ENCODE measurements at regions of chr12 and their contacts with region 1.

Region 1: GRCh38 chr12:13255792-13256691 is 59.5 kb downstream of the EMP1 start:
- DNase-seq: peak; percentile 96
- H3K4me3 ChIP-seq: peak overlapping the region in 2 of 3 experiments; percentile 27 to 34
- H3K27ac ChIP-seq: peak overlapping the region; percentile 2
- H3K4me1 ChIP-seq: peaks cover 17% of the 10 kb centered on the region
- H3K27me3 ChIP-seq: no peaks in the 10 kb centered on the region
- CTCF ChIP-seq: peak; percentile 98 to 100
- POLR2A ChIP-seq: no peak

Region 2: GRCh38 chr12:13154027-13154538 is 102.0 kb before region 1 on chr12:
- CTCF ChIA-PET with region 1: no interaction called
- POLR2A ChIA-PET with region 1: no interaction called
- dilution Hi-C with region 1: no loop called
- intact Hi-C with region 1: no loop called
- DNase-seq: no peak
- H3K4me3 ChIP-seq: no peak overlapping the region
- H3K27ac ChIP-seq: no peak overlapping the region
- H3K4me1 ChIP-seq: no peaks in the 10 kb centered on the region
- H3K27me3 ChIP-seq: no peaks in the 10 kb centered on the region
- CTCF ChIP-seq: no peak
- POLR2A ChIP-seq: no peak

Region 3: GRCh38 chr12:13270817-13271216 is 14.8 kb after region 1 on chr12:
- CTCF ChIA-PET with region 1: interaction called, 29 read pairs
- POLR2A ChIA-PET with region 1: no interaction called
- dilution Hi-C with region 1: no loop called
- intact Hi-C with region 1: no loop called
- DNase-seq: no peak
- H3K4me3 ChIP-seq: no peak overlapping the region
- H3K27ac ChIP-seq: no peak overlapping the region
- H3K4me1 ChIP-seq: no peaks in the 10 kb centered on the region
- H3K27me3 ChIP-seq: peaks cover 8 to 22% of the 10 kb centered on the region in 2 experiments
- CTCF ChIP-seq: no peak
- POLR2A ChIP-seq: no peak

Region 4: GRCh38 chr12:13278249-13278787 is 22.3 kb after region 1 on chr12:
- CTCF ChIA-PET with region 1: interaction called, 57 read pairs
- POLR2A ChIA-PET with region 1: no interaction called
- dilution Hi-C with region 1: no loop called
- intact Hi-C with region 1: loop called (anchors 1 kb)
- DNase-seq: peak; percentile 72
- H3K4me3 ChIP-seq: no peak overlapping the region
- H3K27ac ChIP-seq: no peak overlapping the region
- H3K4me1 ChIP-seq: no peaks in the 10 kb centered on the region
- H3K27me3 ChIP-seq: peaks cover 35 to 48% of the 10 kb centered on the region in 2 experiments
- CTCF ChIP-seq: peak; percentile 99
- POLR2A ChIP-seq: no peak

Region 5: DNA sequence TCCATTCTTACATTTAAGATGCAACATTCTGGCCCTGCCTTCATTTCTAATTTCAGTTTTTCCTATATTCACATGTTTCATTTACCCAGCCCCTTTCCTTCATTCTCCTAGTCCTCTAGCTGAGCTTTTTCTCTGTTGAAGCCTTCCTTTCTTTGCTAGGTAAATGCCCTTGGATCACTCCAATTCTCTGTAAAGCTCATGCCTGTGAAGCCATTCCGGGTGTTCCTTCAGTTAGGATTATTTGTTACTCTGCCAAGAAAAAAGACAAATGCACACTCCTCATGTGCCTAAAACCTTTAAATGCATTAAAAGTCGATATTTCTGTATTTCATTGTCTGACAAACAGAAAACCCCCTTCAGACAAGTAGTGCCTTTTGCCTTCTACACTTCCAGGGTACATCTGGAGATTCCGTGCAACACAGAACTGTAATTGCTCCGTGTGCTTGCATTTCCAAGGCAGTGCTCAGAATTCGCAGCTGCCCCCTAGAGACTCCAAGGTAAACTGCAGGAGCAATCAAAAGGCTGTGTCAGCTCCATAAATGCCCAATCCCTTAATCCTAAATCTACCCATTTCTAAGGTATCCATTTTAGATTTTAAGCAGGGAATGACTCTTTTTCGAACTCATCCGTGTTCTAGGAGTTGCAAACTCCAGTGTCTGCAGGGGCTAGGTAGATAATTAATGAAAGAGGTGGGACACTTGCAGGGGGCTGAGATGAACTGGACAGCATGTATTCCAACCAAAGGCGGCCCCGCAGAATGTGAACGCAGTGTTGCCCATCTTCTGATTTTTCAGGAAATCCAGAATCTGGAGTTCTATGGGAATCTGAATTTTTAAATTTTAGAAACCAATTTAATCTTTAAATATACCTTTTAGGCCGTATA is 405.2 kb after region 1 on chr12:
- CTCF ChIA-PET with region 1: interaction called, 10 read pairs
- POLR2A ChIA-PET with region 1: no interaction called
- dilution Hi-C with region 1: no loop called
- intact Hi-C with region 1: loop called (anchors 2 kb)
- DNase-seq: peak; percentile 44
- H3K4me3 ChIP-seq: no peak overlapping the region
- H3K27ac ChIP-seq: no peak overlapping the region
- H3K4me1 ChIP-seq: no peaks in the 10 kb centered on the region
- H3K27me3 ChIP-seq: peaks cover 0 to 4% of the 10 kb centered on the region in 2 experiments
- CTCF ChIP-seq: peak; percentile 63 to 80
- POLR2A ChIP-seq: no peak

Measured in endothelial cell of umbilical vein (primary cell).